ENCODE measurements at regions of chr22 and their contacts with region 1.

Region 1: GRCh38 chr22:24423519-24424000 is 3.8 kb upstream of the ADORA2A start:
- DNase-seq: peak; percentile 70
- ATAC-seq: peak; percentile 41
- H3K4me3 Mint-ChIP-seq: peak overlapping the region; percentile 46
- H3K27ac Mint-ChIP-seq: peak overlapping the region; percentile 34
- H3K4me1 Mint-ChIP-seq: peaks cover 44% of the 10 kb centered on the region
- H3K27me3 Mint-ChIP-seq: peaks cover 3% of the 10 kb centered on the region

Region 2: GRCh38 chr22:24289114-24289513 is 134.4 kb before region 1 on chr22:
- CTCF ChIA-PET with region 1: no interaction called
- POLR2A ChIA-PET with region 1: no interaction called
- DNase-seq: no peak
- ATAC-seq: no peak
- H3K4me3 Mint-ChIP-seq: no peak overlapping the region
- H3K27ac Mint-ChIP-seq: no peak overlapping the region
- H3K4me1 Mint-ChIP-seq: peaks cover 29% of the 10 kb centered on the region
- H3K27me3 Mint-ChIP-seq: no peaks in the 10 kb centered on the region

Region 3: GRCh38 chr22:24433813-24434470 is 10.4 kb after region 1 on chr22:
- CTCF ChIA-PET with region 1: interaction called, 85 read pairs
- POLR2A ChIA-PET with region 1: interaction called, 34 read pairs
- DNase-seq: no peak
- ATAC-seq: peak; percentile 46
- H3K4me3 Mint-ChIP-seq: peak overlapping the region; percentile 44
- H3K27ac Mint-ChIP-seq: peak overlapping the region; percentile 89
- H3K4me1 Mint-ChIP-seq: peaks cover 95% of the 10 kb centered on the region
- H3K27me3 Mint-ChIP-seq: no peaks in the 10 kb centered on the region

Region 4: DNA sequence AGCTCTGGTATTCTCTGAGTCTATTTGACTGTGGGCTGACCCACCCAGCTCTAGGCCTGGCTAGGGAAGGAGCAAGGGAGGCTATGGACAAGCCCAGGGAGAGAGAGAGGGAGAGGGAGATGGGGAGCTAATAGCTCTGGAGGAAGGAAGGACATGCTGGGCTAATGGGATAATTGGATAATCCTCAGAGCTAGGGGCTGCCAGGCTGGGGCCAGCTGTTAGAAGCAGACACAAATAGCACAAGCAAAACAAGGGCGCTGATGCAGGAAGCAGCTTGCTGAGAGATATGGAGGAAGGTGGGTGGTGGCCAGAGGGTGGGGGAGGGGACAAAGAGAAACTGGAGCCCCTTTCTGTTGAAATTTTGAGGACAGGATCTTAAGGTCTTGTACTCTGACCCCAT is 27.1 kb after region 1 on chr22:
- CTCF ChIA-PET with region 1: no interaction called
- POLR2A ChIA-PET with region 1: no interaction called
- DNase-seq: no peak
- ATAC-seq: no peak
- H3K4me3 Mint-ChIP-seq: no peak overlapping the region
- H3K27ac Mint-ChIP-seq: no peak overlapping the region
- H3K4me1 Mint-ChIP-seq: peaks cover 12% of the 10 kb centered on the region
- H3K27me3 Mint-ChIP-seq: no peaks in the 10 kb centered on the region

Region 5: GRCh38 chr22:24482575-24482974 is 59.0 kb after region 1 on chr22:
- CTCF ChIA-PET with region 1: interaction called, 10 read pairs
- POLR2A ChIA-PET with region 1: interaction called, 3 read pairs
- DNase-seq: no peak
- ATAC-seq: no peak
- H3K4me3 Mint-ChIP-seq: no peak overlapping the region
- H3K27ac Mint-ChIP-seq: no peak overlapping the region
- H3K4me1 Mint-ChIP-seq: peaks cover 9% of the 10 kb centered on the region
- H3K27me3 Mint-ChIP-seq: peaks cover 5% of the 10 kb centered on the region

Region 6: DNA sequence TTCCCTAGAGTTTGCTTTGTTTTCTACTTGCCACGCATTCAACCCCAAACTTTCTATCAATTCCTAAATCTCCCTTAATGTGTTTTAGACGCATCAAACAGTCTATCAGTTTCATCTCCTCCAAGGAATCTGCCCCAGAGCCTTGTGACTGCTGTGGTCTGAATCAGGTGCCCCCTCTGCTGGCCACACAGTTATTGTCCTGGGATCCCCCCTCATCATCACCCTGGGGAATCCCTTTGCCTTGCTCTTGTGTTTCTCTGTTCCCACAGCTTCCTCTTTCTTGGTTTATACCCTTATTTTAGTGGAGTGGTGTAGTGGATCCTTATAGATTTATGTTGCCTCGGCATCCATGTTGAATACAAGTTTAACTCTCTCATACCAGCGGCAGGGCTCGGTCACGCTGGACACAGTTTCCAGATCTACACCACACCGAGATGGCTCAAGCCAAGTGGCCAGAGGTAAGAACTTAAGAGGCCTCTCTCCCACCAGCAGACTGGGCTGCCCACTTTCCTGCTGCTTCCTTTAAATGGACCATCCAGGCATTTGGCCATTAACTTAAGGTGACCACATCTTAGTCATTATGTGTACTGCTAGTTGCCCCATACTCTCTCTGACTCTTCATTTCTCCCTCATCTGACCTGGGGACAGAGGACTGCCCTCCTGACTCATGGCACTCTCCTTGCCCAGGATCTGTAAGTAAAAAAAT is 79.7 kb after region 1 on chr22:
- CTCF ChIA-PET with region 1: interaction called, 30 read pairs
- POLR2A ChIA-PET with region 1: interaction called, 5 read pairs
- DNase-seq: peak; percentile 70
- ATAC-seq: peak; percentile 76
- H3K4me3 Mint-ChIP-seq: no peak overlapping the region
- H3K27ac Mint-ChIP-seq: no peak overlapping the region
- H3K4me1 Mint-ChIP-seq: peaks cover 34% of the 10 kb centered on the region
- H3K27me3 Mint-ChIP-seq: peaks cover 6% of the 10 kb centered on the region

Region 7: GRCh38 chr22:24525416-24526037 is 102.0 kb after region 1 on chr22:
- CTCF ChIA-PET with region 1: interaction called, 35 read pairs
- POLR2A ChIA-PET with region 1: interaction called, 3 read pairs
- DNase-seq: peak; percentile 91
- ATAC-seq: peak; percentile 96
- H3K4me3 Mint-ChIP-seq: no peak overlapping the region
- H3K27ac Mint-ChIP-seq: no peak overlapping the region
- H3K4me1 Mint-ChIP-seq: peaks cover 14% of the 10 kb centered on the region
- H3K27me3 Mint-ChIP-seq: peaks cover 3% of the 10 kb centered on the region

Measured in activated CD8-positive, alpha-beta T cell treated with anti-CD3 and anti-CD28 coated beads, Interleukin-2, amount 10 ng/mL, durations not matched to agents 7 days and 5 days (primary cell).